T-cell (primary cell): ENCODE measurements at regions of chr14 and their contacts with region 1.

Region 1: GRCh38 chr14:92652413-92653151 is 95.8 kb downstream of the LGMN start:
- DNase-seq: peak in 5 of 35 experiments; percentile 13 to 36 (median 29)
- ATAC-seq: no peak
- H3K4me3 ChIP-seq: peak overlapping the region; percentile 69 to 98
- H3K4me3 Mint-ChIP-seq: peak overlapping the region; percentile 99
- H3K27ac ChIP-seq: peak overlapping the region; percentile 97
- H3K27ac Mint-ChIP-seq: peak overlapping the region; percentile 95 to 100
- H3K4me1 ChIP-seq: peaks cover 40 to 93% of the 10 kb centered on the region in 2 experiments
- H3K4me1 Mint-ChIP-seq: peaks cover 73 to 85% (median 80%) of the 10 kb centered on the region in 3 donors
- H3K27me3 ChIP-seq: no peaks in the 10 kb centered on the region
- H3K27me3 Mint-ChIP-seq: no peaks in the 10 kb centered on the region

Region 2: GRCh38 chr14:92612988-92613658 is 39.5 kb before region 1 on chr14:
- CTCF ChIA-PET with region 1: interaction called, 8 to 11 read pairs
- POLR2A ChIA-PET with region 1: interaction called in 1 of 2 experiments, 3 read pairs
- DNase-seq: peak; percentile 34 to 81 (median 61)
- ATAC-seq: peak in 2 of 4 experiments; percentile 18 to 25
- H3K4me3 ChIP-seq: no peak overlapping the region
- H3K4me3 Mint-ChIP-seq: peak overlapping the region in 1 of 3 donors; percentile 10
- H3K27ac ChIP-seq: no peak overlapping the region
- H3K27ac Mint-ChIP-seq: peak overlapping the region; percentile 23 to 64
- H3K4me1 ChIP-seq: peaks cover 35 to 71% of the 10 kb centered on the region in 2 experiments
- H3K4me1 Mint-ChIP-seq: peaks cover 57 to 73% (median 62%) of the 10 kb centered on the region in 3 donors
- H3K27me3 ChIP-seq: no peaks in the 10 kb centered on the region
- H3K27me3 Mint-ChIP-seq: no peaks in the 10 kb centered on the region